ENCODE measurements at regions of chr12 and their contacts with region 1.

Region 1: GRCh38 chr12:74111688-74112360 is 425.8 kb upstream of the ATXN7L3B start:
- DNase-seq: peak; percentile 57 to 62
- H3K4me3 ChIP-seq: no peak overlapping the region
- H3K4me3 Mint-ChIP-seq: no peak overlapping the region
- H3K27ac Mint-ChIP-seq: no peak overlapping the region
- H3K4me1 ChIP-seq: no peaks in the 10 kb centered on the region
- H3K4me1 Mint-ChIP-seq: no peaks in the 10 kb centered on the region
- H3K27me3 ChIP-seq: no peaks in the 10 kb centered on the region
- H3K27me3 Mint-ChIP-seq: no peaks in the 10 kb centered on the region
- CTCF ChIP-seq: peak; percentile 63 to 68

Region 2: DNA sequence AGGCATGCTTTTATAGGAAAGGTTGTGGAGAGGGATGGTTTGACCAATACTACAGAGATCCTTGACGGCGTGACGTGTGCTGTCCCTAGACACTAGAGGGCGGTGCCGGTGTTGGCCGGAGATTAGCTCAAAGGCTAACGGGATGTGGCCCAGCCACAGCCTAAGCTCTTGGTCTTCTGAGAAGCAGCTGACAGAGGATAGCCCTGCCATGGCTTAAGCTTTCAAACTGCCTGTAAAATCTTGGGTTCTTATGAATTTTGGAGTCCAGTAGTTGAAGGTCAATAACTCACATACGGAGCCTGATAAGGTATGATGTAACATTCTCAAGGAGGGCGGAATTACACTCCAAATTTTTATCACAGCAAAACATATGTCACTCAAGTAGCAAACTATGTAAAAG is 89.9 kb before region 1 on chr12:
- CTCF ChIA-PET with region 1: interaction called, 3 read pairs
- POLR2A ChIA-PET with region 1: no interaction called
- intact Hi-C with region 1: loop called (anchors 1 kb)
- DNase-seq: peak; percentile 80 to 82
- H3K4me3 ChIP-seq: no peak overlapping the region
- H3K4me3 Mint-ChIP-seq: no peak overlapping the region
- H3K27ac Mint-ChIP-seq: no peak overlapping the region
- H3K4me1 ChIP-seq: 0 out of 2 replicates have a peak, but pooled peaks cover 3% of the 10 kb centered on the region
- H3K4me1 Mint-ChIP-seq: no peaks in the 10 kb centered on the region
- H3K27me3 ChIP-seq: no peaks in the 10 kb centered on the region
- H3K27me3 Mint-ChIP-seq: no peaks in the 10 kb centered on the region
- CTCF ChIP-seq: peak; percentile 79 to 93

Region 3: GRCh38 chr12:74317078-74317601 is 205.3 kb after region 1 on chr12:
- CTCF ChIA-PET with region 1: interaction called, 3 read pairs
- POLR2A ChIA-PET with region 1: no interaction called
- intact Hi-C with region 1: loop called (anchors 1 kb)
- DNase-seq: peak in 1 of 2 experiments; percentile 42
- H3K4me3 ChIP-seq: no peak overlapping the region
- H3K4me3 Mint-ChIP-seq: no peak overlapping the region
- H3K27ac Mint-ChIP-seq: no peak overlapping the region
- H3K4me1 ChIP-seq: no peaks in the 10 kb centered on the region
- H3K4me1 Mint-ChIP-seq: no peaks in the 10 kb centered on the region
- H3K27me3 ChIP-seq: no peaks in the 10 kb centered on the region
- H3K27me3 Mint-ChIP-seq: no peaks in the 10 kb centered on the region
- CTCF ChIP-seq: peak; percentile 44 to 54

Region 4: DNA sequence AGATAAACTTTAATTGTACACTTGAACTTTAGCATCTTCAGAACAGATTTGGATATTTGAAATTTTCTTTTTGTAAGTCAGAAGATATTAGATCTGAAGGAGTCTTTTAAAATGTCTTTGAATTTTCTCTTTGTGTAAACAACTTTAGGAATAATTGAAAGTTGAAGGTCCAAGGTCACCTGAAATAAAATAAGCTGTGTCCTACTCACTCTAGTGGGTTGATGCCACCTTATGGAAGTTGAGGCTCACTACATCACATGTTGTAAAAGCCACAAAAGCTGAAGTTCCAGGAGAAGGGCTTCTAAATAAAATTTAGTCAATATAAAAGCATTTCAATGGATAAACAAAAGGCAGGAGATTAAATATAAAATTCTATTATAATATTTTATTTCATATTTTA is 303.8 kb after region 1 on chr12:
- CTCF ChIA-PET with region 1: interaction called, 5 read pairs
- POLR2A ChIA-PET with region 1: no interaction called
- intact Hi-C with region 1: loop called (anchors 1 kb)
- DNase-seq: peak in 1 of 2 experiments; percentile 23
- H3K4me3 ChIP-seq: no peak overlapping the region
- H3K4me3 Mint-ChIP-seq: no peak overlapping the region
- H3K27ac Mint-ChIP-seq: no peak overlapping the region
- H3K4me1 ChIP-seq: no peaks in the 10 kb centered on the region
- H3K4me1 Mint-ChIP-seq: no peaks in the 10 kb centered on the region
- H3K27me3 ChIP-seq: no peaks in the 10 kb centered on the region
- H3K27me3 Mint-ChIP-seq: no peaks in the 10 kb centered on the region
- CTCF ChIP-seq: peak; percentile 24 to 55

Region 5: DNA sequence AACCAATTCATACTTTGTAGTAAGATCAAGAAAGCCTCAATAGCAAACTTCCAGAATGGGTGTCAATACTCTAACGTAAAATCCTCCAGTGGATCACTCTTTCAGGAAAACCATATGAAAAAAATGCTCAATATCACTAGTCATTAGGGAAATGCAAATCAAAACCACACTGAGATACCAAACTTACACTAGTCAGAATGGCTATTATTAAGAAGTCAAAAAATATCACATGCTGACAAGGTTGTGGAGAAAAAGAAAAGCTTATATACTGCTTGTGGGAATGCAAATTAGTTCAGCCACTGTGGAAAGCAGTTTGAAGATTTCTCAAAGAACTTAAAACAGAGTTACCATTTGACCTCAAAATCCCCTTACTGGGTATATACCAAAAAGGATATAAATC is 376.3 kb after region 1 on chr12:
- CTCF ChIA-PET with region 1: no interaction called
- POLR2A ChIA-PET with region 1: no interaction called
- intact Hi-C with region 1: no loop called
- DNase-seq: no peak
- H3K4me3 ChIP-seq: no peak overlapping the region
- H3K4me3 Mint-ChIP-seq: no peak overlapping the region
- H3K27ac Mint-ChIP-seq: no peak overlapping the region
- H3K4me1 ChIP-seq: no peaks in the 10 kb centered on the region
- H3K4me1 Mint-ChIP-seq: peaks cover 4% of the 10 kb centered on the region
- H3K27me3 ChIP-seq: no peaks in the 10 kb centered on the region
- H3K27me3 Mint-ChIP-seq: no peaks in the 10 kb centered on the region
- CTCF ChIP-seq: no peak

Region 6: GRCh38 chr12:74646831-74647230 is 535.0 kb after region 1 on chr12:
- CTCF ChIA-PET with region 1: no interaction called
- POLR2A ChIA-PET with region 1: no interaction called
- intact Hi-C with region 1: loop called (anchors 1 kb)
- DNase-seq: no peak
- H3K4me3 ChIP-seq: no peak overlapping the region
- H3K4me3 Mint-ChIP-seq: no peak overlapping the region
- H3K27ac Mint-ChIP-seq: no peak overlapping the region
- H3K4me1 ChIP-seq: no peaks in the 10 kb centered on the region
- H3K4me1 Mint-ChIP-seq: no peaks in the 10 kb centered on the region
- H3K27me3 ChIP-seq: no peaks in the 10 kb centered on the region
- H3K27me3 Mint-ChIP-seq: peaks cover 3% of the 10 kb centered on the region
- CTCF ChIP-seq: no peak